ENCODE measurements at regions of chr7 and their contacts with region 1.

Region 1: GRCh38 chr7:100889761-100890634 is 483 bp upstream of the UFSP1 start:
- H3K4me3 Mint-ChIP-seq: peak overlapping the region; percentile 79
- H3K27ac Mint-ChIP-seq: peak overlapping the region; percentile 78
- H3K4me1 Mint-ChIP-seq: peaks cover 65% of the 10 kb centered on the region
- H3K27me3 Mint-ChIP-seq: peaks cover 47% of the 10 kb centered on the region

Region 2: DNA sequence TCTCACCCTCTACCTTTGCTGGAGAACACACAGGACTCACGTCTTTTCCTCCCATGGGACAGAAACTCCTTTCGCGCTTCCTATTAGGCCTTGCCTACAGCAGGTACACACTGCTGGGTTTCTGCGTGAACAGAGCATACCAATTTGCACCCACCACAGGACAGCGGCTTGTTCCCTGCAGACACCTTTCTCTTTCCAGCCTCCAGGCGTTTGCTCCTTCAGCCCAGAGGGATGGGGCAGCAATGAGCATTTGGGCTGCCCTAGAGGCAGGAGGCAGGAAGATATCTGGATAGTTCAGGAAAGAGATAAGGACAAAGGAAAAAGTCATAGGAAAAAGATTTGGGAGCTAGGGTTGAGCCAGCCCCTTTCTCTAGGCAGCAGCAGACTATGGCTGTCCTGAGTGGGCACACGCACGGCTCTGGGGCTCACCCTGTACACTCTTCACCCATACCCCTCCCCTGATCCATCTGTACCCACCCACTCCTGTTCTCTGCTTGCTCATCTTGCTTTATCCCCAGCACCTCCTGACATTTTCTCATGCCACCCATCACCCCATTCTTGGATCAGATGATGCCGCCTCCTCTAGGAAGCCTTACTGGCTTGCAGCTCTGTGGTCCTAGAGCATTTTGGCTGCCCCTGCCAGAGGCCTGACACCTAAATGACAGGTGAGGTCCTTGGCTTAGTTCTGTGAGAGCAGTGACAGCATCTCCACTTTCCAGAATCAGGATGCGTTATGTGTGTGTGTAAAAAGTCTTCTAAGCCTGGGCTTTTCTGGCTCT is 623.2 kb before region 1 on chr7:
- intact Hi-C with region 1: no loop called
- H3K4me3 Mint-ChIP-seq: no peak overlapping the region
- H3K27ac Mint-ChIP-seq: no peak overlapping the region
- H3K4me1 Mint-ChIP-seq: peaks cover 11% of the 10 kb centered on the region
- H3K27me3 Mint-ChIP-seq: peaks cover 21% of the 10 kb centered on the region

Region 3: GRCh38 chr7:100785878-100786277 is 104.1 kb before region 1 on chr7:
- intact Hi-C with region 1: no loop called
- H3K4me3 Mint-ChIP-seq: no peak overlapping the region
- H3K27ac Mint-ChIP-seq: no peak overlapping the region
- H3K4me1 Mint-ChIP-seq: no peaks in the 10 kb centered on the region
- H3K27me3 Mint-ChIP-seq: peaks cover 28% of the 10 kb centered on the region

Region 4: DNA sequence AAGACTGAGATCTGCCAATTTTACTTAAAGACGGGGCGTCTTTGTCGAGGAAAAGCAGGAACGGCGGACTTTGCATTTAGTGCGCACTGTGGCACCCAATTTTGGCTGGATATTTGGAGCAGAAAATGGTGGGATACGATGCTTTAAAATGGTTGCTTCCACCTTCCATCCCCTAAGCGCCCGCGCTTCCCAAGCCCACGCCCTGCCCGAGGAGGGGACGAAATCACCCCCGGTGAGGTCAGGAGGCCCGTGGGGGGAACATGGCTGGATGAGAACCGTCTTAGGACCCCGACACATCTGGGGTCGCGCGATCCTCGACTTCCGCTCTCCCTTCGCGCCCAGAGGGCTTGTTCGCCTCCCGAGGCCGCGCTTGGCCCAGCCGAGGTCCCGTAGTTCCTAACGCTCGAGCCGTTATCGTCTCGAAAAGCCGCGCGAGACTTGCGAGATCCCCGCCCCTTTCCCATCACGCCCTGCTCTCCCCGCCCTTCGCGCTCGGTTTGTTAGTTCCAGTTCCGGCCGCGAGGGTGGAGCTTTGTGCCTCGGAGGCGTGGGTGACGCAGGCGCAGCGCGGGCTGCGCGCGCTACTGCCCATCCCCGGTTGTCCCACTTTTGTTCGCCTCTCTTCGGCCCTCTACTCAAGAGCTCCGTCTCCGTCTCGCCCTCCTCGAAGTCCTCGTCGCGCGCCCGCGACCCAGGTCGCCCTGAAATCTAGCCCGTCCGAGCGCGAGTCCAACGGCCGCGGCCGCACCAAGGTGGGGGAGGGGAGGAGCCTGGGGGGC is 15.2 kb before region 1 on chr7 and contains the start of gene SRRT:
- intact Hi-C with region 1: loop called (anchors 1 kb)
- H3K4me3 Mint-ChIP-seq: peak within 1 kb of the TSS; percentile 97
- H3K27ac Mint-ChIP-seq: peak within 1 kb of the TSS; percentile 94
- H3K4me1 Mint-ChIP-seq: peaks cover 55% of the 10 kb centered on the region
- H3K27me3 Mint-ChIP-seq: no peaks in the 10 kb centered on the region

Region 5: DNA sequence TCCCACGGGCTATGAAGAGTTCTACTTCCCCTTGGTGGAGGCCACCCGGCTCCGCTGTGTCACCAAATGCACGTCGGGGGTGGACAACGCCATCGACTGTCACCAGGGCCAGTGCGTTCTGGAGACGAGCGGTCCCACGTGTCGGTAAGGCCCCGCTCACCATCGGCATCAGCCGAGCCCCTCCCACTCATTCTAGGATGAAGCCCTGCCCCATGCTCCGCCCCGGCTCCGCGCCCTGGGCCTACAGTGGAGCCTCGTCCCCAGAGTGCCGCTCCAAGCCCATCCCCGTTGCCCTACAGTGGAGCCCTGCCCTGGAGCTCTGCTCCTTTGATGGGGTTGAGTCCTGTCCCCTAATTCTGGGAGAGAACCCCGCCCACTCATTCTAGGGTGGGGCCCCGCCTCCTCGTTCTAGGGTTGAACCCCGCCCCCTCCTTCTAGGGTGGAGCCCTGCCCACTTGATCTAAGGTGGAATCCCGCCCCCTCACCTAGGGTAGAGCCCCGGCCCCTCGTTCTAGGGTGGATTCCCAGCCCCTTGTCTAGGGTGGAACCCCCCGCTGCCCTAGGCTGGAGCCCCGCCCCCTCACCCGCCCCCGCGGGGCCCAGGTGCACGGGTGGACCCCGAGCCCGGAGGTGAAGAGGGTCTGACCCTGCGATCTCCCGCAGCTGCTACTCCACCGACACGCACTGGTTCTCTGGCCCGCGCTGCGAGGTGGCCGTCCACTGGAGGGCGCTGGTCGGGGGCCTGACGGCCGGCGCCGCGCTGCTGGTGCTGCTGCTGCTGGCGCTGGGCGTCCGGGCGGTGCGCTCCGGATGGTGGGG is 75.9 kb after region 1 on chr7:
- intact Hi-C with region 1: loop called (anchors 5 kb)
- H3K4me3 Mint-ChIP-seq: no peak overlapping the region
- H3K27ac Mint-ChIP-seq: no peak overlapping the region
- H3K4me1 Mint-ChIP-seq: peaks cover 6% of the 10 kb centered on the region
- H3K27me3 Mint-ChIP-seq: peaks cover 65% of the 10 kb centered on the region

Region 6: GRCh38 chr7:101058355-101058754 is 168.4 kb after region 1 on chr7:
- intact Hi-C with region 1: loop called (anchors 1 kb)
- H3K4me3 Mint-ChIP-seq: no peak overlapping the region
- H3K27ac Mint-ChIP-seq: no peak overlapping the region
- H3K4me1 Mint-ChIP-seq: no peaks in the 10 kb centered on the region
- H3K27me3 Mint-ChIP-seq: peaks cover 44% of the 10 kb centered on the region

Region 7: DNA sequence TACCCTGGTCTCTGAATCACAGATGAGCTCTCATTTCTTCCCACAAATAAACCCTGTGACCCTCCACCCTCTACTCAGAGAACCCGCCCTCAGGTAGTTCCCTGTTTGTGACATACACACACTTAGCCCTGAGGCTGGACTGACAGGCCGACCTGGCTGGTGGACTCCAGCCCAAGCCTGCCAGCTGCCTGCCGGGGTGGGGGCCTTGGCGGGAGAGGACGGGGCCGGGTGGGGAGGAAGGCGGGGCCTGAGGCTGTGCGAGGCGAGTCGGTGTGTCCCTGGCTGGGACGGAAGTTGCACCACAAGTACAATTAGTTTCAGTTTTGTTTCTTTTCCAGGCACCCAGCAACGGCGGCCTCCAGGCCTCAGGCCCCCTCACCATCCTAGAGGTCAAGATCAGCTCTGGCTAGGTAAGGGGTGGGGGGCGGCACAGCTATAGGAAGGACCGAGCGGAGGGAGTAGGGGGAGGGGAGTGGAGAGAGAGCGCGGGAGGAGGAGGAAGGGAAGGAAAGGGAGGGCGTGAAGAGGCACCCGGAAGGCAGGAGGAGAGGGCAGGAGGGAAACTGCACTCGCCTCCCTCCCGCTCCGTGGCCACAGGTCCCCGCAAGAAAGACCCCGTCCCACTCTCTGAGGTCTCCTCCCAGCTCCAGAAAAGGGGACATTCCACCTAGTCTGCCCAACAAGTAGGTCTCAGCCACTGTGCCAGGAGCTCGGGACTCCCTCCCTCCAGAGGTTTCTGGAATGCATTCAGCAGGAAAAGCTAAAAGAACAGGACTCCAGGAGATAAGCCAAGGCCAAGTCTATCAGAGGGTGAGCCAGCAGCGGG is 195.4 kb after region 1 on chr7 and contains the start of gene TRIM56:
- intact Hi-C with region 1: loop called (anchors 5 kb)
- H3K4me3 Mint-ChIP-seq: peak within 1 kb of the TSS; percentile 99
- H3K27ac Mint-ChIP-seq: peak within 1 kb of the TSS; percentile 99
- H3K4me1 Mint-ChIP-seq: peaks cover 37% of the 10 kb centered on the region
- H3K27me3 Mint-ChIP-seq: no peaks in the 10 kb centered on the region

Region 8: GRCh38 chr7:101099969-101100781 is 210.2 kb after region 1 on chr7:
- intact Hi-C with region 1: no loop called
- H3K4me3 Mint-ChIP-seq: peak overlapping the region; percentile 32
- H3K27ac Mint-ChIP-seq: peak overlapping the region; percentile 58
- H3K4me1 Mint-ChIP-seq: peaks cover 68% of the 10 kb centered on the region
- H3K27me3 Mint-ChIP-seq: peaks cover 40% of the 10 kb centered on the region